ENCODE measurements at regions of chr11 and their contacts with region 1.

Region 1: GRCh38 chr11:65329944-65330403 is 3.7 kb upstream of the DPF2 start:
- DNase-seq: peak; percentile 87
- H3K4me3 Mint-ChIP-seq: no peak overlapping the region
- H3K27ac Mint-ChIP-seq: peak overlapping the region; percentile 83
- H3K4me1 Mint-ChIP-seq: peaks cover 13% of the 10 kb centered on the region
- H3K27me3 Mint-ChIP-seq: no peaks in the 10 kb centered on the region
- CTCF ChIP-seq: peak; percentile 69

Region 2: DNA sequence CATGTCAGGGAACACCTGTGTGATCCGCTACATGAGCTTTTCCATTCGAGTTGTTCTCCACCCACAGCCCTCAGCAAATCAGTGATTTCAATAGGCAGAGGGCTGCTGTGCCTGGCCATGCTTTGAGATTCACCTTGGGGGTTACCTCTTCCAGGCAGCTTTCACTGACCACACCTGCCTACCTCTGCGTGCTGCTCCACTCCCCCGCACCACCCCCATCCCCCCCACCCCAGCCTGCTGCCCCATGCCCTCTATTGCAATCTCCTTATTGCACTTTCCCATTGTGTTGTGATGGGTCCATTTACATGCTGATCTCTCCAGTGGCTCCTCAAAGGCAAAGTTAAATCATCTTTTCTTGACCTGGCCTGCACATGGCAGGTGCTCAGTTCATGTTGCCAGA is 86.2 kb before region 1 on chr11:
- CTCF ChIA-PET with region 1: no interaction called
- intact Hi-C with region 1: no loop called
- DNase-seq: no peak
- H3K4me3 Mint-ChIP-seq: no peak overlapping the region
- H3K27ac Mint-ChIP-seq: no peak overlapping the region
- H3K4me1 Mint-ChIP-seq: peaks cover 9% of the 10 kb centered on the region
- H3K27me3 Mint-ChIP-seq: no peaks in the 10 kb centered on the region
- CTCF ChIP-seq: no peak

Region 3: DNA sequence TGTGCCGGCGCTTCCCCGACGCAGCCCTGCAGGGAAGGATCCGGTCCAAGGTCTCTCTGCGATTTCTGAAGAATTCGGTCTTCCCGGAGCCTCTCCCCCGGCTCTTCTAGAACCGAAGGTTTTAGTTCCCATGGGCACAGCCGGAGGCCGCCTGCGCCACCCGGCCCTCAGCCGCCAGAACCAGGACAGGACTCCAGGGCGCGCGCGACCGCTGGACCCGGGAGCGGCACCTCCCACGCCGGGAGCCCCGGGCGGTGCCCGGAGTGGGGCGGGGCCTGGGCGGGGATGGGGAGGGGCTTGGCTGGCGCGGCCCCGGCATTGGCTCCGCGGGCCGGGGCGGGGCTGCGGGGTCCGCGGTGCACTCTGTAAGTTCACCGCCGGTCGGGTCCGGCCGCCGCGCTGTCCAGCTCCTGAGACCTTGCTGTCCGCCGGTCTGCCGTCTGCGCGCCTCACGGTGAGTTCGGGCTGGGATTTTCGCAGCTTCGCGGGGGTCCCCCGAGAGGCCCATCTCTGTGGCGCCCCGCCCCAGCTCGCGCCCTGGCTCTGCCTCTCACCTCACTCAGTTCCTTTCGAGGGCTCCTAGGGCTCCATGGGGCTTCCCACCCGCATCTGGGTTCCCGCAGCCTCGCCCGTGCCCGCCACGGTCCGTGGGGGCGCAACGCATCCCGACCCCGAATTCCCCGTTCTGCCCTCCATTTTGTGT is 15.3 kb before region 1 on chr11 and contains the start of gene CDC42EP2:
- CTCF ChIA-PET with region 1: interaction called, 34 read pairs
- intact Hi-C with region 1: no loop called
- DNase-seq: peak; percentile 89
- H3K4me3 Mint-ChIP-seq: peak within 1 kb of the TSS; percentile 96
- H3K27ac Mint-ChIP-seq: peak within 1 kb of the TSS; percentile 89
- H3K4me1 Mint-ChIP-seq: peaks cover 43% of the 10 kb centered on the region
- H3K27me3 Mint-ChIP-seq: no peaks in the 10 kb centered on the region
- CTCF ChIP-seq: no peak
- total RNA-seq, gene CDC42EP2: 35.6 and 43.2 TPM in 2 replicates